HCT116 (cell line): ENCODE measurements at regions of chr5 and their contacts with region 1.

Region 1: DNA sequence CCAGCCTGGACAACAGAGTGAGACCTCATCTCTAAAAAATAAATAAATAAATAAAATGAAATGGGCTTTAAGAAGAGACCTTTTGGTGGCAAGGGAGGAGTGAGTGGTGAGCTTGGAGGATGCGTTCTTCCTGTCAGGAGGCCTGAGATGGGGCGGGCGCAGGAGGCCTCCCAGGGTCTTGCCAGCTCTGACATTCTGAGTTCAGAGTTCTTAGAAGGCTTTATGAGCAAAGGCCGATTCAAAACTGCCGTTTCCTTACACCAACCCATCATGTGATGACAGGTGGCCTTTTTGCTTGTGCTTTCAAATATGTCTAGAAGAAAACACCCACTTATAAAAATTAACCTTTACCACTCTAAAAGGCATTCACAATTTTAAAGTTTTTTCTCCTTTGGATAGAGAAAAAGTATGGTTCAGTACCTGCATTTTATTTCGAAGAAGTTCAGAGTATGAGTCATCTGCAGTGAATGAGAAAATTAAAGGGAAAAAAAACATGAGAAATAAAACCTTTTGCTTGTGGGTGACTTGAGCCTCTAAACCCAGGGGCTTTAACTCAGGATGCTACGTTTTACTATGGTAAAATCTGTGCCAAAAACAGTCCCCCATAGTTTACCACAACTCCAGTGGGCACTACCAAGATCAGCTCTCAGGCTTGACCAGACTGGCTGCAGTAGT is 157.4 kb upstream of the OTULINL start:
- DNase-seq: no peak
- ATAC-seq: no peak
- H3K4me3 ChIP-seq: no peak overlapping the region
- H3K27ac ChIP-seq: no peak overlapping the region
- H3K4me1 ChIP-seq: peaks cover 0 to 6% of the 10 kb centered on the region in 2 experiments; a peak in 1 of 4 replicates
- H3K27me3 ChIP-seq: no peaks in the 10 kb centered on the region
- CTCF ChIP-seq: no peak
- POLR2A ChIP-seq: no peak
- RAD21 ChIP-seq: no peak

Region 2: DNA sequence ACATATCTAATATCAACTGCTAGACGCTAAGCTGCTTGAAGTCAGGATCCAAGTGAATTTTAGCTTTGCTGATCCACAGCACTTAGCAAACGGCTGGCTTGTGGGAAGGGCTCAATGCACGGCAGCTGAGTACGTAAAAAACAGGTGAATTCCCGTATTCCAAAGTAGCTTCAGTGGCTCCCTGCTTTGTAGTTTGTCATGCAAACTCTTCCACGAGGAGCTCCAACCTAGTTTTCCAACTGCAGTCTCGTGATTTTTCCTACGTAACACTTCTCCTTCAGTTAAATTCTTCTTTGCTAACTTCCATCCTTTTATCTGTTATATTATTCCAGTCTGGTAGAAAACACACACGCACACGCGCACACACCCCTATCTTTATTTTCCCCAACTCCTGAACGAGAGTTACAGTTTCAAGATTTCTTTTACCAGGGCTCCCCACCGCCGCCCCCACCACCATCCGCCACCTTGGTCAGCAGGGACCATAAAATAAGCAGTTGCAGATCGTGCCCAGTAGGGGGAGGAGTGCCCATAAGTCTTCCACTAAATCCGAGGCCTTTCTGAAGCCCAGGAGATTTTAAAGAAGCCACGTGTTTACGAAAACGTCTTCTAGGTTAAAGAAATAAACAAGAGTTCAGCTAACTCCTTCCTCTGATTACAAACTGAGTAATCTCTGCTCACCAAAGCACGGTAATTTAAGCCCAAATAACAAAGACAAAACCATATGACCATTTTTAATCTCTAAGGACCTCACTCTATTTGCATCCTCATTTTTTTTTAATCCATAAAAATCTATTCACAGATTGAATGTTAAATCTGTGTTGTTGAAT is 315.8 kb before region 1 on chr5:
- CTCF ChIA-PET with region 1: no interaction called
- POLR2A ChIA-PET with region 1: no interaction called
- RAD21 ChIA-PET with region 1: no interaction called
- intact Hi-C with region 1: no loop called
- DNase-seq: peak; percentile 71
- ATAC-seq: peak; percentile 85
- H3K4me3 ChIP-seq: peak overlapping the region in 1 of 2 experiments; percentile 27; a peak in 2 of 4 replicates
- H3K27ac ChIP-seq: no peak overlapping the region
- H3K4me1 ChIP-seq: peaks cover 18 to 40% of the 10 kb centered on the region in 2 experiments
- H3K27me3 ChIP-seq: no peaks in the 10 kb centered on the region
- CTCF ChIP-seq: peak; percentile 57 to 80 (median 73); a peak in 5 of 6 replicates
- POLR2A ChIP-seq: no peak
- RAD21 ChIP-seq: peak; percentile 82

Region 3: GRCh38 chr5:14471507-14471906 is 47.4 kb after region 1 on chr5:
- CTCF ChIA-PET with region 1: no interaction called
- POLR2A ChIA-PET with region 1: no interaction called
- RAD21 ChIA-PET with region 1: no interaction called
- intact Hi-C with region 1: loop called (anchors 1 kb)
- DNase-seq: no peak
- ATAC-seq: no peak
- H3K4me3 ChIP-seq: no peak overlapping the region
- H3K27ac ChIP-seq: no peak overlapping the region
- H3K4me1 ChIP-seq: no peaks in the 10 kb centered on the region
- H3K27me3 ChIP-seq: no peaks in the 10 kb centered on the region
- CTCF ChIP-seq: no peak
- POLR2A ChIP-seq: no peak
- RAD21 ChIP-seq: no peak

Region 4: DNA sequence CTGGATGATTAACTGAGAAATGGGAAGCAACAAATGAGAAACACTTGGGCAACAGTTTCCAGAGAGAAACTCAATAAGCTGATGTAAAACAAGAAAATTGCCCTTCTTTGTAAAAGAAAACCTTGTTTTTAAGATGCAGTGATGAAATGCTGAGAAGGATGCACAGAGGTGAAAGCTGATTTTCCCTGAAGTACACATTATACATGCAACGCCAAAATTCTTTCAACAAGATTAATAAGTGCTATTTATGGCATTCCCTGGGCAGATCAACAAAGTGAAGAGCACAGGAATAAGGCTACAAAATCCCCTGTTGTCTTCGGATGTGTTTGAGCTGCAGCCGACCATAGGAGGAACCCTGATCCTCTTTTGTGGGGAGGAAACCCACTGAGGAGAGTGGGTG is 655.4 kb after region 1 on chr5:
- CTCF ChIA-PET with region 1: no interaction called
- POLR2A ChIA-PET with region 1: no interaction called
- RAD21 ChIA-PET with region 1: no interaction called
- intact Hi-C with region 1: no loop called
- DNase-seq: no peak
- ATAC-seq: no peak
- H3K4me3 ChIP-seq: no peak overlapping the region
- H3K27ac ChIP-seq: no peak overlapping the region
- H3K4me1 ChIP-seq: no peaks in the 10 kb centered on the region
- H3K27me3 ChIP-seq: no peaks in the 10 kb centered on the region
- CTCF ChIP-seq: no peak
- POLR2A ChIP-seq: no peak
- RAD21 ChIP-seq: no peak